ENCODE measurements at regions of chr6 and their contacts with region 1.

Region 1: GRCh38 chr6:36642913-36643817 is 35.3 kb upstream of the CDKN1A start:
- DNase-seq: peak; percentile 88
- ATAC-seq: peak; percentile 97
- H3K4me3 ChIP-seq: peak overlapping the region; percentile 14 to 70 (median 39)
- H3K27ac ChIP-seq: peak overlapping the region; percentile 61
- H3K4me1 ChIP-seq: peaks cover 57% of the 10 kb centered on the region
- H3K27me3 ChIP-seq: 0 out of 5 replicates have a peak, but pooled peaks cover 0 to 6% of the 10 kb centered on the region in 2 experiments
- CTCF ChIP-seq: no peak; the same call in 1 of the 2 replicates
- EP300 ChIP-seq: no peak
- POLR2A ChIP-seq: 0 out of 4 replicates have a peak, but pooled peaks of 1 of the 2 experiments have one; percentile 25
- RAD21 ChIP-seq: no peak

Region 2: DNA sequence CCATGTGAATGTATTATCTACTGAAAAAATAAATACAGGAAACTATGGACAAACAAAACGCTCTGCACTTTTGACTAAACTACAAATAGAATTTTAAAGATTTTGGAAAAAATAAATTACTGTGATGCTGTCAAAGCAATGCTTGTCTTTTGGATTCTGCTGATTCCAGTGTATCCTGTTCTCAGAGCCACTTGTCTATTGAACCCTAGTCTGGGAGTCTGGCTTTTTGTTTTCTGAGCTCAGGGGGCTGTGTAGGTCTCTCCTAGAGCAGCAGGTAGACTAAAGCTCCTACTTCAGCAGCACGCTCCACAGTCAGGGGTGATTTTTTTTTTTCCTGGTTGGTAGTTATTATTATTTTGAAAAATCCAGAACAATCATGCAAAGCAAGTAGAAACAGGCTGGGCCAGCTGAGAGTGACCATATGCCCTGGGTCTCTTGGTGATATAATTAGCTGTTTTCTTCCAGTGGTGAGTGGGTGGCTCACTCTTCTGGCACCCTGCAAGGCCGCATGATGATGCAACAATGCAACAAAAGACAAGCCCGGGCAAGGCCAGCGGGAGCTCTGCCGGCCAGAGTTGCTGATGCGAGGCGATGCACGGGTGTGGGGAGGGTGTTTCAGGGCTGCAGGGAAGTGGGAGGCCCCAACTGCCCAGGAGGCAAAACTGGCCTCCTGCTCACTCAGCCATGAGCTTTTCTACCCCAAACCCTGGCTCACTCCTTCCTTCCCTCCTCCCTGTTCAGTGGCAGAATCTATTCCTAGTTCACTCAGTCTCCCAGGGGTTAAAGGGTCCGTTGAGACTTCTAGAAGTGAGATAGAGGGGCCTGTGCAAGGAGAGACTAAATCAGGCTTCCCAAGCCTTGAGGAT is 23.8 kb after region 1 on chr6:
- CTCF ChIA-PET with region 1: no interaction called
- POLR2A ChIA-PET with region 1: interaction called, 29 read pairs
- in situ Hi-C with region 1: no loop called
- intact Hi-C with region 1: no loop called
- DNase-seq: peak; percentile 93
- ATAC-seq: peak; percentile 90
- H3K4me3 ChIP-seq: no peak overlapping the region
- H3K27ac ChIP-seq: peak overlapping the region; percentile 77
- H3K4me1 ChIP-seq: peaks cover 89% of the 10 kb centered on the region
- H3K27me3 ChIP-seq: peaks cover 0 to 9% of the 10 kb centered on the region in 2 experiments; a peak in 2 of 5 replicates
- CTCF ChIP-seq: peak; percentile 55
- EP300 ChIP-seq: peak; percentile 36 to 80; a peak in 2 of 4 replicates
- POLR2A ChIP-seq: peak; percentile 43 to 66; a peak in 2 of 4 replicates
- RAD21 ChIP-seq: 0 out of 2 replicates have a peak, but pooled peaks have one; percentile 31

Region 3: GRCh38 chr6:36759148-36759759 is 116.1 kb after region 1 on chr6:
- CTCF ChIA-PET with region 1: no interaction called
- POLR2A ChIA-PET with region 1: no interaction called
- in situ Hi-C with region 1: no loop called
- intact Hi-C with region 1: no loop called
- DNase-seq: peak; percentile 63
- ATAC-seq: peak; percentile 96
- H3K4me3 ChIP-seq: no peak overlapping the region
- H3K27ac ChIP-seq: no peak overlapping the region
- H3K4me1 ChIP-seq: peaks cover 10% of the 10 kb centered on the region; the same call in 1 of the 2 replicates
- H3K27me3 ChIP-seq: peaks cover 3 to 73% of the 10 kb centered on the region in 2 experiments; a peak in 4 of 5 replicates
- CTCF ChIP-seq: peak; percentile 97
- EP300 ChIP-seq: no peak
- POLR2A ChIP-seq: no peak
- RAD21 ChIP-seq: peak; percentile 85

Measured in HepG2 (cell line).